ENCODE measurements at regions of chr16 and their contacts with region 1.

Region 1: GRCh38 chr16:79316004-79316458 is 284.5 kb downstream of the MAF start:
- DNase-seq: no peak
- ATAC-seq: no peak
- H3K4me3 ChIP-seq: no peak overlapping the region
- H3K27ac ChIP-seq: no peak overlapping the region
- H3K4me1 ChIP-seq: peaks cover 16% of the 10 kb centered on the region
- H3K27me3 ChIP-seq: no peaks in the 10 kb centered on the region
- CTCF ChIP-seq: no peak

Region 2: DNA sequence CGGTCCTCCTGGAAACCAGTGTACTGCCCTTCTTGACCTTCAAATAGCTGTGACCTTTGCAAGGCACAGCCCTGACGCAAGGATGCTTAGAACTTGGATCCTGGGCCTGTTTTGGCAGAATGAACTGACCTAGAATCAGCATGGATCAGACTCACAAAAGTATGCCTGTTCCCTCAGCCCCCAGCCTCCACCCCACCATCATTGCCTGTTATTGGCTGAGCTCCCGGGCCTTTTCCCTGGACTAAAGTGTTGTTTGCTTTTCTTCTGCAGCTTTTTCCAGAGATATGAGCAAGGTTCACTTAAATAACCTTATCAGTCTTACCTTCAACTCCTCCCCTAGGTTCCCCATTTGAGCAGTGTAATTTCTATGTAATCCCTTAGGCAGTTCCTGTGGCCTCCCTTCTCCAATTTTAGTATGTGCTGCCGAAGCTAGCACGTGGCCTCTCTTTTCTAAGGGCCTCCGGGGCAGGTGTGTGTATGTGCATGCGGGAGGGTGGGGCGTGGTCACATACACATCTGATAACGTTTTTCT is 62.9 kb before region 1 on chr16:
- intact Hi-C with region 1: loop called (anchors 5 to 10 kb)
- DNase-seq: no peak
- ATAC-seq: no peak
- H3K4me3 ChIP-seq: no peak overlapping the region
- H3K27ac ChIP-seq: no peak overlapping the region
- H3K4me1 ChIP-seq: peaks cover 14% of the 10 kb centered on the region
- H3K27me3 ChIP-seq: no peaks in the 10 kb centered on the region
- CTCF ChIP-seq: no peak

Region 3: DNA sequence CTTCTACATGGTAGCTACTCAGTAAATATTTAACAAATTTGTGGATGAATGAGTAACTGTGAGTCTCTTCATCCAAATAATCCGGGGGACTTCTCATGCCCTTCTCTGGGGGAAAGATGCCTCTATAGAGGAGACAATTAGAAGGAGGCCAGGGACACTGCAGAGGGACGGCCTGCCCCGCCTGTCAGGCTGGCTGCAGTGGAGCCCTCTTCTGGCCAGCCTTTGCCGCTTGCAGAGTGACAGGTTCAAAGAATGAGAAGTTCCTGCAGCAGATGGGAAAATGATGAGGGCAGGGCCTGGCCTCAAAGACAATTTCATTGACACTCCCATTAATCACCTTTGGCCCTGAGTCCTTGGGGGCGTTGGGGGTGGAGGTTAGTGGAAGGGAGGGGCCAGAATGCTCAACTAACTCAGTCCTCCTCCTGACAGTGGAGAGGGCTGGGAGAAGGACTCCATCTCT is 54.5 kb before region 1 on chr16:
- intact Hi-C with region 1: loop called (anchors 5 to 10 kb)
- DNase-seq: peak; percentile 23 to 65
- ATAC-seq: peak; percentile 56 to 72 (median 60)
- H3K4me3 ChIP-seq: no peak overlapping the region
- H3K27ac ChIP-seq: no peak overlapping the region
- H3K4me1 ChIP-seq: no peaks in the 10 kb centered on the region
- H3K27me3 ChIP-seq: no peaks in the 10 kb centered on the region
- CTCF ChIP-seq: peak; percentile 48

Region 4: GRCh38 chr16:79437764-79438751 is 122.0 kb after region 1 on chr16:
- intact Hi-C with region 1: loop called in 1 of 2 experiments (anchors 10 kb)
- DNase-seq: peak; percentile 59 to 76
- ATAC-seq: peak; percentile 85 to 94 (median 89)
- H3K4me3 ChIP-seq: peak overlapping the region; percentile 44
- H3K27ac ChIP-seq: peak overlapping the region; percentile 79
- H3K4me1 ChIP-seq: peaks cover 23% of the 10 kb centered on the region
- H3K27me3 ChIP-seq: no peaks in the 10 kb centered on the region
- CTCF ChIP-seq: no peak

Measured in psoas muscle (tissue), 8 donors.